Posterior vena cava (tissue), 2 donors: ENCODE measurements at regions of chr14 and their contacts with region 1.

Region 1: GRCh38 chr14:75577729-75578101 is 705 bp upstream of the FLVCR2 start:
- DNase-seq: peak; percentile 96

Region 2: GRCh38 chr14:75648066-75648838 is 70.5 kb after region 1 on chr14:
- intact Hi-C with region 1: loop called (anchors 2 kb)
- DNase-seq: no peak

Region 3: GRCh38 chr14:75654127-75654732 is 76.5 kb after region 1 on chr14:
- intact Hi-C with region 1: loop called (anchors 2 kb)
- DNase-seq: peak; percentile 93